ENCODE measurements at regions of chr1 and their contacts with region 1.

Region 1: DNA sequence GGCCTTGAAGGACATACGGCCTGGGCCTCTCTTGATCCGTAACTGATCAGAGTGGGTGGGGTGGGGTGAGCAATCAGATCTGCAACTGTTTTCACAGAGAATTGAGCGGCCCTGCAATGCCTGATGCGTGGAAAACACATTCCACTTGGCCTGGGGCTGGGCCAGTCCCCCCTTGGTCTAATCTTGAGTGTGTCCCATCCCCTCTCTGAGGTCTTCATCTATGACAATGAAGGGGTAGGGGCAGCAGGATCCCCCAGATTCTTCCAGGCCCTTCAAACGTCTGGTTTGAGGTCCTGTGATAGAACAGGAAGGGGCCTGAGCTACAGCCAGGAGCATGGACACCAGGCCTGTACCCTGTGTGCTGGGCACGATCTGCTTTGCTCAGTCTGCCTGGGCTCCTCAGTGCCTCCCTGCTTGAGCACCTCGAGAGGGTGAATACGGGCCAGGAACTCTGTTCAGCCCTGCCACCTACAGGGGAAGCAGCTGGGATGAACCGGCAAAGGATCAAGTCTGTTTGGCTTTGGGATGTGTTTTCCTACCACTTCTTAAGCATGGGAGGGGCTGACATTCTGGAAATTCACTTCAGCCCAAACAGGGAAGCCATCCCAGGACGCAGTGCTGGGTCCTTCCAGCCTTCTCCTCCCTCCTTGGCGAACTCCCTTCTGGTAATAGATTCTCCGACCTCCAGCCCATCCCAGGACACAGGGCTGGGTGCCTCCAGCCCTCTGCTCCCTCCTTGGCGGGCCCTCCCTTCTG is 56.0 kb upstream of the SELENON start:
- DNase-seq: peak; percentile 78 to 83 (median 81)
- H3K4me3 ChIP-seq: no peak overlapping the region
- H3K27ac ChIP-seq: peak overlapping the region; percentile 26 to 83
- H3K4me1 ChIP-seq: peaks cover 16% of the 10 kb centered on the region
- H3K27me3 ChIP-seq: no peaks in the 10 kb centered on the region
- CTCF ChIP-seq: peak; percentile 21 to 65 (median 61)
- EP300 ChIP-seq: no peak
- POLR2A ChIP-seq: peak; percentile 13

Region 2: DNA sequence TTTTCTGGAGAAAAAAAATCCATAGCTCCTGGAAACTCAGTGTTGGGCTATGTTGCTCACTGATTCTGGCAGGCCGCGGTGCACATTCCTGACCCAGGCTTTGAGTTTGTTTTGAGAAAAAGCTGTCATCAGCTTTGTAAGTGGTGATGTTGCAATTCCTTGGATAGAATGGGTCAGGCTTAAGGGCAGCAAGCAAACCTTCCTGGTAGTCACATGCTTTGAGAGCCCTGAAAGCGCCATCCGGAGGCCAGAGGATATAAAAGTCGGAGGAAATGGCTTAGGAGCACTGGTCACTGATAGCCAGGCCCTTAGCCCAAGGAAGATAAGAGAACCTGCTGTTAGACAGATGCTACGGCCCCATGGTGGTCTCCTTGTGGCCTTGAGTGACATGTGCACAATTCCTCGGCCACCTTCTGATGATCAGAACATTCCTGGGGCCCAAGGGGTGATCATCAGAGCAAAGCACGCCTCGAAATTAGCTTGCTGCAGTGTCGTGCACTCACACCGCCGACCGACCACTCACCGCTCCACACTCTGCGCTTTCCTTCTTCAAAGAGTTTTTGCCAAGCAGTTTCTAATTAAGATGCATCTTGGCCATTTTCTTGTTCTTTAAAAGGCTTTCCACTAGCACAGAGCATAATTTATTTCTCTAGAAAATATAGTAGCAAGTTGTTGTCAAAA is 48.8 kb before region 1 on chr1:
- intact Hi-C with region 1: loop called in 2 of 4 experiments (anchors 5 kb)
- DNase-seq: peak; percentile 73 to 88 (median 80)
- H3K4me3 ChIP-seq: no peak overlapping the region
- H3K27ac ChIP-seq: peak overlapping the region; percentile 60 to 72
- H3K4me1 ChIP-seq: peaks cover 37% of the 10 kb centered on the region
- H3K27me3 ChIP-seq: no peaks in the 10 kb centered on the region
- CTCF ChIP-seq: peak in 1 of 3 donors; percentile 44
- EP300 ChIP-seq: peak; percentile 92
- POLR2A ChIP-seq: no peak